ENCODE measurements at regions of chr11 and their contacts with region 1.

Region 1: DNA sequence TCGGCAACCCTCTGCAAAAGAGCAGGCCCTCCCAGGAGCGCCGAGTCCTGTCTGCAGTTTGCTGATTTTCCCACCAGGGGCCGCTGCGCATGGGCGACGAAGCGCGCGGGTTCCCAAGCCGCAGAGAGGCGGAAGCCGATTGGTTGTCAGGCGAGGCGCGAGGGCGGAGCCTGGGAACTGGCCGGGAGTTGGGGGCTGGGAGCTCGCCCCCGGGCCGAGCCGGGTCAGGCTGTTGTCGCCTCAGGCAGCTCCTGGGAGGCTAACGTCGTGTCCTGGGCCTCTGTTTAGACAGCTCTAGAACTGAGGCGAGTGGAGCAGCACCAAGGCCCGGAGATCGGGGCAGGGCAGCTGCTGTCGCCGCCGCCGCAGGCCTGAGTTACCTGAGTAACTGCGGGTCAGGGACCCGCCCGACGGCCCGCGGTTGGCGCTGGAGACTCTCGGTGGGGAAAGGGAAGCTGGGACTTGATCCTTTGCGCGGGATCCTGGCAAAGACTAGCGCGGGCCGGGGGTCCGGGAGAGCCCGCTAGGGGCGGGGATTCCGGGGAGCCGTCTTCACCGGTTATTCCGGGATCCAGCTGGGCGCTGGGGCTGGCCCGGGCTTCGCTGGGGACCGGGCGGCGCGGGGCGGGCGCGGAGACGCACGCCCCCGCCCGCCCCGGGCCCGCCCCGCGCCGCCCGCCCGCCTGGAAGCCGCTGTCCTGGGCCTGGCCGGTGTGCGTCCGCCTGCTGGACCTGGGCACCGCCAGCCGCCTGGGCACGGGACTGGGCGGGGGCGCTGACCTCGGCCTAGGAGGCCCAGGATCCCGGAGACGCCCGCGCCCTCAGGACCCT is at the start of gene STIM1:
- DNase-seq: peak; percentile 98
- H3K4me3 Mint-ChIP-seq: peak within 1 kb of the TSS; percentile 97
- H3K27ac Mint-ChIP-seq: peak within 1 kb of the TSS; percentile 100
- H3K4me1 Mint-ChIP-seq: peaks cover 56% of the 10 kb centered on the region
- H3K27me3 Mint-ChIP-seq: no peaks in the 10 kb centered on the region
- total RNA-seq, gene STIM1: 111 to 113 TPM

Region 2: DNA sequence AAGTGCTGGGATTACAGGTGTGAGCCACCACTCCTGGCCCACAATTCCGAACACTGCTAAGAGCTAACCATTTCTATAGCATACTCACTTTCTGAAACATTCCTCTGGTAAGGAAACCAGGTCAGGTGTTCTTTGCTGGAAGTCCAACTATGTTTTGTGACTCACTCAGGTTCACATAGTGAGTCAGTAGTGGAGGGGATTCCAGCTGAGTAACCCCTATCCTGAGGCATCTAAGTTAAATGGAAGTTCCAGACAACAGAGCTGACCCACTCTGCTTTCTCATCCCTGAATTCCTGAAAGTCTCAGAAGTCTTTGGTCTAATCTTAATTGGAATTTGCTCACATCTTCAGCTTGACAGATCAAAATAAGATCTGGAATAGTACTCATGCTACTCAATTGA is 181.0 kb before region 1 on chr11:
- CTCF ChIA-PET with region 1: no interaction called
- POLR2A ChIA-PET with region 1: no interaction called
- DNase-seq: no peak
- H3K4me3 Mint-ChIP-seq: no peak overlapping the region
- H3K27ac Mint-ChIP-seq: no peak overlapping the region
- H3K4me1 Mint-ChIP-seq: no peaks in the 10 kb centered on the region
- H3K27me3 Mint-ChIP-seq: no peaks in the 10 kb centered on the region

Region 3: GRCh38 chr11:3781423-3781822 is 73.8 kb before region 1 on chr11:
- CTCF ChIA-PET with region 1: interaction called, 9 read pairs
- POLR2A ChIA-PET with region 1: interaction called, 10 read pairs
- DNase-seq: no peak
- H3K4me3 Mint-ChIP-seq: no peak overlapping the region
- H3K27ac Mint-ChIP-seq: peak overlapping the region; percentile 12
- H3K4me1 Mint-ChIP-seq: peaks cover 50% of the 10 kb centered on the region
- H3K27me3 Mint-ChIP-seq: no peaks in the 10 kb centered on the region

Region 4: GRCh38 chr11:3841426-3842350 is 13.5 kb before region 1 on chr11:
- CTCF ChIA-PET with region 1: interaction called, 461 read pairs
- POLR2A ChIA-PET with region 1: interaction called, 639 read pairs
- DNase-seq: peak; percentile 93
- H3K4me3 Mint-ChIP-seq: peak overlapping the region; percentile 90
- H3K27ac Mint-ChIP-seq: peak overlapping the region; percentile 96
- H3K4me1 Mint-ChIP-seq: peaks cover 44% of the 10 kb centered on the region
- H3K27me3 Mint-ChIP-seq: no peaks in the 10 kb centered on the region

Region 5: GRCh38 chr11:3905080-3905953 is 50.1 kb after region 1 on chr11:
- CTCF ChIA-PET with region 1: interaction called, 24 read pairs
- POLR2A ChIA-PET with region 1: interaction called, 14 read pairs
- DNase-seq: peak; percentile 70
- H3K4me3 Mint-ChIP-seq: no peak overlapping the region
- H3K27ac Mint-ChIP-seq: peak overlapping the region; percentile 54
- H3K4me1 Mint-ChIP-seq: peaks cover 68% of the 10 kb centered on the region
- H3K27me3 Mint-ChIP-seq: no peaks in the 10 kb centered on the region

Region 6: GRCh38 chr11:3947061-3947460 is 91.9 kb after region 1 on chr11:
- CTCF ChIA-PET with region 1: interaction called, 25 read pairs
- POLR2A ChIA-PET with region 1: interaction called, 129 read pairs
- DNase-seq: peak; percentile 72
- H3K4me3 Mint-ChIP-seq: peak overlapping the region; percentile 65
- H3K27ac Mint-ChIP-seq: peak overlapping the region; percentile 97
- H3K4me1 Mint-ChIP-seq: peaks cover 95% of the 10 kb centered on the region
- H3K27me3 Mint-ChIP-seq: no peaks in the 10 kb centered on the region

Region 7: GRCh38 chr11:4044976-4045646 is 189.9 kb after region 1 on chr11:
- CTCF ChIA-PET with region 1: interaction called, 11 read pairs
- POLR2A ChIA-PET with region 1: interaction called, 6 read pairs
- DNase-seq: no peak
- H3K4me3 Mint-ChIP-seq: no peak overlapping the region
- H3K27ac Mint-ChIP-seq: no peak overlapping the region
- H3K4me1 Mint-ChIP-seq: peaks cover 4% of the 10 kb centered on the region
- H3K27me3 Mint-ChIP-seq: no peaks in the 10 kb centered on the region

Region 8: DNA sequence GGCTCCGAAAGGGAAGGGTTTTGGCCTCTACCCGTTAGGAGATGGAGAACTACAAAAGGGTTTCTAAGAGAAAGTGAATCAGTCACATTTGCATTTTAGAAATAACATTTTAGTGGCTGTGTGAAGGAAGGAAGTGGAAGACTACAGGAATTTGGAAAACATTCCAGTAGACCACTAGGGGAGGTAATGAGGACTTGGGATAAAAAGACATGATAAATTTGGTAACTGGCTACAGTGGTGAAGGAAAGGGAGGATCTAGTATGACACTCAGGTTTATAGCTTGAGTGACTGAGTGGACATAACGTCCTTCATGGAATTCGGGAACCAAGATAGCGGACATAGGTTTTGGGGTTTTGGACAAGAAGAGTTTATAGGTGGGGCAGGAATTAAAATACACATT is 232.4 kb after region 1 on chr11:
- CTCF ChIA-PET with region 1: interaction called, 21 read pairs
- POLR2A ChIA-PET with region 1: interaction called, 79 read pairs
- DNase-seq: no peak
- H3K4me3 Mint-ChIP-seq: no peak overlapping the region
- H3K27ac Mint-ChIP-seq: peak overlapping the region; percentile 64
- H3K4me1 Mint-ChIP-seq: peaks cover 64% of the 10 kb centered on the region
- H3K27me3 Mint-ChIP-seq: no peaks in the 10 kb centered on the region

Measured in activated CD4-positive, alpha-beta memory T cell treated with anti-CD3 and anti-CD28 coated beads, Interleukin-2, amount 10 ng/mL, durations not matched to agents 7 days and 5 days (primary cell).